ENCODE measurements at regions of chr3 and their contacts with region 1.

Region 1: DNA sequence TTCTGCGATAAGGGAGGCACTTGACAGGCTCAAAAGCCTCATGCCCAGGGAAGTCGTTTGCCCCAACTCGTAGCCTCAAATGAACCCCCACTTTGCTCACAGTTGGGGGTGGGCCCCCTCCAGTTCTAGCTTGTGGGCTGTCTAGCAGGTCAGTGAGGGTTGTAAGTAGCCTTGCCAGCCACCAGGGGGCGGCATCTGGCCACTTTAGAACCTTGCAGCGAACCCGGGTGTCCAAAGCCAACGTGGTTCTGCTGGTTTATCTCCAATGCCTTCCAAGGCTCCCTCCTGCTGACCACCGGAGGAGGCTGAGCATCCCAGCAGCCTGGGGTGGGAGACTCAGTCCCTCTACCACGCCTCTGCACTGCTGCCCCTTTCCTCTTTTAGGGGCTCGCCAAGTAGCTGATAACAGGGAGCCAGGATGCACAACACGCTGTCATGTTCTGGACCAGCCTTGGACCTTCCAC is 9.2 kb upstream of the RBSN start:
- DNase-seq: peak; percentile 78
- H3K4me3 ChIP-seq: no peak overlapping the region
- H3K27ac ChIP-seq: no peak overlapping the region
- H3K4me1 ChIP-seq: no peaks in the 10 kb centered on the region
- H3K27me3 ChIP-seq: no peaks in the 10 kb centered on the region
- CTCF ChIP-seq: peak; percentile 93

Region 2: DNA sequence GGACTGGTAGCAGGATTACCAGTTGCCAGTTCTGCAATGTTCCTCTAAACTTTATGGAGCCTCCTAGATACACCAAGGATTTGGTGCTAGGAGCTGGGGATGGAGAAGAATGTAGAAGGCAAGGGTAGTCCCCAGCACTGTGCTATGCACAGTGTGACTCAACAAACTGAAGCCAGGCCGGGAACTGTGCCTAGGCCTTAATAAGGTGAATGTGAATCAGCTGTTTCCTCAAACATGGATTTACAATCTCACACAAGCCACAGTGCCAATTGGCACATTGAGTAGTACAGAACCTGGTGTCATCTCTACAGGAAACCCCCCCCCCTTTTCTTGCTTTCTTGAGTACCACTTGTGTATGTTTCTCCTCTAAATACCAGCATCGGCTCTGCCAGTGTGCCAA is 75.5 kb before region 1 on chr3:
- CTCF ChIA-PET with region 1: no interaction called
- POLR2A ChIA-PET with region 1: no interaction called
- intact Hi-C with region 1: no loop called
- DNase-seq: no peak
- H3K4me3 ChIP-seq: no peak overlapping the region
- H3K27ac ChIP-seq: no peak overlapping the region
- H3K4me1 ChIP-seq: no peaks in the 10 kb centered on the region
- H3K27me3 ChIP-seq: no peaks in the 10 kb centered on the region
- CTCF ChIP-seq: no peak

Region 3: GRCh38 chr3:15051531-15051930 is 56.6 kb before region 1 on chr3:
- CTCF ChIA-PET with region 1: no interaction called
- POLR2A ChIA-PET with region 1: no interaction called
- intact Hi-C with region 1: no loop called
- DNase-seq: peak; percentile 67
- H3K4me3 ChIP-seq: no peak overlapping the region
- H3K27ac ChIP-seq: no peak overlapping the region
- H3K4me1 ChIP-seq: no peaks in the 10 kb centered on the region
- H3K27me3 ChIP-seq: no peaks in the 10 kb centered on the region
- CTCF ChIP-seq: peak; percentile 78

Region 4: DNA sequence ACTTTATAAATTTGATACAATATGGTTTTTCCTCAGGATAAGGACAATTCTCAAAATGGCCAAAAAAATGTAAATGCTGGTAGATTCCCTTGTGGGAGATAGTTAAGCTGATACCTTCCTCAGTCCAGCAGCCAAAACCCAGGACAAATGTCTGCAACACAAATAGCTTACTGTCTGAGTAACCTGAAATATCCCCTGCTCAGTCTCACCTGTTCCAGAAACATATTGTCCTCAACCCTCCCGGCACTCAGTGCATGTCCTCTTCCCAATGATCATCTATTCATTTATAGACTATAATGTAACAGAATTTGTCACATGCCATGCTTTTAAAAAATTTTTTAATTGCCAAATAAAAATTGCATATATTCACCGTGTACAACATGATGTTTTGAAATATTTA is 21.4 kb before region 1 on chr3:
- CTCF ChIA-PET with region 1: no interaction called
- POLR2A ChIA-PET with region 1: no interaction called
- intact Hi-C with region 1: loop called (anchors 1 kb)
- DNase-seq: no peak
- H3K4me3 ChIP-seq: no peak overlapping the region
- H3K27ac ChIP-seq: no peak overlapping the region
- H3K4me1 ChIP-seq: no peaks in the 10 kb centered on the region
- H3K27me3 ChIP-seq: no peaks in the 10 kb centered on the region
- CTCF ChIP-seq: no peak

Region 5: DNA sequence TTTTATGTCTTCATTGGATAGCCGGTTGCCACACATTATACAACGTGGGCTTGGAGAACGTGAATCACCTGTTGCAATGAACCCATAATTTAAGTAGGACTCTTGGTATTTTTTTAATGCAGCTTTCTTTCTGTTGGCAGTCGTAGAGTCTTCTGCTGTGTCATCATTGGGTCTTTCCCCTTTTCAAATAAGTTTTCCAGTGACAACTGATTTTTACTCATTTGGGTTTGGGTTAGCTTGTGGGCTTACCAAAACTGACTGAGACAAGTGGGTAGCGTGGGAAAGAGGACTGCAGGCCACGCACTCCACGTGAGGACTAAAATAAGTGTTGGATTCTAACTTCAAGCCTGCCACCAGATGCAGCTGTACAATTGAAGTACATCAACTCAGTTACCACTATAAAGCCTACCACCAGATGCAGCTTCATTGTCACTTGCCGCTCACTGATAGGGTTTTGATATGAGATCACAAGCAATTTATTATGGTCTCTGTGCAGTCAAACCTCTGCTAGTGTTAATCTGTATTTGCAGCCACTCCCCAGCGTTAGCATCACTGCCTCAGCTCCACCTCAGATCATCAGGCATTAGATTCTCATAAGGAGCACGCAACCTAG is 91.5 kb after region 1 on chr3:
- CTCF ChIA-PET with region 1: no interaction called
- POLR2A ChIA-PET with region 1: no interaction called
- intact Hi-C with region 1: loop called (anchors 1 kb)
- DNase-seq: no peak
- H3K4me3 ChIP-seq: no peak overlapping the region
- H3K27ac ChIP-seq: no peak overlapping the region
- H3K4me1 ChIP-seq: no peaks in the 10 kb centered on the region
- H3K27me3 ChIP-seq: no peaks in the 10 kb centered on the region
- CTCF ChIP-seq: no peak

Region 6: DNA sequence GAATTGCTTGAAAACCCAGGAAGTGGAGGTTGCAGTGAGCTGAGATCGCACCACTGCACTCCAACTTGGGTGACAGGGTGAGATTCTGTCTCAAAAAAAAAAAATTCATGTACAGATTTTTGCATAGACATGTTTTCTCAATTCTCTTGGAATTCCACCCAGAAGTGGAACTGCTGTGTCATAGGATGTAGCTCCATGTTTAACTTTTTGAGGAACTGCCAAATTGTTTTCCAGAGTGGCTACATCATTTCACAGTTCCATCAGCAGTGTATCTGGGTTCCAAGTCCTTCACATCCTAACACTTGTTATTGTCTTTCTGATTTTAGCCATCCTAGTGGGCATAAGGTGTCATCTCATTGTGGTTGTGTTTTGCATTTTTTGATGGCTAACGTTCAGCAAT is 107.9 kb after region 1 on chr3:
- CTCF ChIA-PET with region 1: no interaction called
- POLR2A ChIA-PET with region 1: no interaction called
- intact Hi-C with region 1: no loop called
- DNase-seq: no peak
- H3K4me3 ChIP-seq: no peak overlapping the region
- H3K27ac ChIP-seq: no peak overlapping the region
- H3K4me1 ChIP-seq: no peaks in the 10 kb centered on the region
- H3K27me3 ChIP-seq: no peaks in the 10 kb centered on the region
- CTCF ChIP-seq: no peak

Measured in A673 (cell line).